ENCODE measurements at regions of chr9 and their contacts with region 1.

Region 1: GRCh38 chr9:38263532-38263931 is 129.0 kb upstream of the ALDH1B1 start:
- DNase-seq: peak in 1 of 2 experiments; percentile 35
- H3K4me3 ChIP-seq: no peak overlapping the region
- H3K4me3 Mint-ChIP-seq: no peak overlapping the region
- H3K27ac Mint-ChIP-seq: no peak overlapping the region
- H3K4me1 ChIP-seq: no peaks in the 10 kb centered on the region
- H3K4me1 Mint-ChIP-seq: no peaks in the 10 kb centered on the region
- H3K27me3 ChIP-seq: no peaks in the 10 kb centered on the region
- H3K27me3 Mint-ChIP-seq: no peaks in the 10 kb centered on the region
- CTCF ChIP-seq: peak; percentile 27 to 50

Region 2: DNA sequence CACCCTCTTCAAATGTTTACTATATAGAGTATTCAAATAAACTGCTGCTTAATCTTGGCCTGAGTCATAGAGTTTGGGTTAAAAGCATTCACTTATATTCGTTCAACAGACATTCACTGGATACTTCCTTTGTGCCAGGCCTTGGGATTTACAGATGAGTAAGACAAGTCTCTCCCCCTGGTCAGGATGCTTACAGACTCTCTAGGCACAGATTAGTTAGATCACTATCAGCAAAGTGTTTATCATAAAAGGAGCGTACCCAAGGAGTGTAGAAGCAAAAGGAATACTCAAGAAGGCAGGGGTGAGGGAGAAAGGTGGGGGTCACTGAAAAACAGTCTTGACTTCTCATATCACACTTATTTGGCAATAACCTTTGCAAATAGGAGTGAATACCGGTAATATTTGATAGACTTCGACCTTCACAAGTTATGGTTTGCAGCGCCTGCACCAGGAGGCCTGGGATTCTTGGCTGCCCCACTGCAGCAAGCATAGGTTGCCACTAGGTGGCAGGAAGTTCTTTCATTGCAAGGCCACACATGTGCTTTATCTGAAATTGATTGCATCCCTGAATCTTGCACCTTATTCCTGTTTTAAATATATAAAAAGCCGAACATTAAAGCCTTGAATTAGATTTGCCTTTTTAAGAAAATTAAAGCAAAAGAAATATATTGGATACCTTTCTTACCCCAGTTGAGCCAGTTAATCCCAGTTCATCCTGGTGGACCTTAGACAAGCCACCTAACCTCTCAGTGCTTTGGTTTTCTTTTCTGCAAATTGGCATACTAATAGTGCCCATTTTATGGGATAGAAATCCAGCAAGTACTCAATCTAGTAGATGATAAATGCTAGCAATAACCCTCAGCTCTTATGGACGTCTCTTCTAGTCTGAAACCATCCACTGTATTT is 516.4 kb before region 1 on chr9:
- CTCF ChIA-PET with region 1: interaction called, 3 read pairs
- POLR2A ChIA-PET with region 1: no interaction called
- intact Hi-C with region 1: loop called (anchors 5 kb)
- DNase-seq: peak; percentile 61 to 73
- H3K4me3 ChIP-seq: no peak overlapping the region
- H3K4me3 Mint-ChIP-seq: no peak overlapping the region
- H3K27ac Mint-ChIP-seq: no peak overlapping the region
- H3K4me1 ChIP-seq: no peaks in the 10 kb centered on the region
- H3K4me1 Mint-ChIP-seq: no peaks in the 10 kb centered on the region
- H3K27me3 ChIP-seq: no peaks in the 10 kb centered on the region
- H3K27me3 Mint-ChIP-seq: no peaks in the 10 kb centered on the region
- CTCF ChIP-seq: peak; percentile 85 to 90

Region 3: GRCh38 chr9:38088006-38088925 is 175.3 kb before region 1 on chr9:
- CTCF ChIA-PET with region 1: interaction called, 20 read pairs
- POLR2A ChIA-PET with region 1: no interaction called
- intact Hi-C with region 1: loop called (anchors 1 kb)
- DNase-seq: peak; percentile 74 to 86
- H3K4me3 ChIP-seq: no peak overlapping the region
- H3K4me3 Mint-ChIP-seq: no peak overlapping the region
- H3K27ac Mint-ChIP-seq: no peak overlapping the region
- H3K4me1 ChIP-seq: no peaks in the 10 kb centered on the region
- H3K4me1 Mint-ChIP-seq: peaks cover 5% of the 10 kb centered on the region
- H3K27me3 ChIP-seq: no peaks in the 10 kb centered on the region
- H3K27me3 Mint-ChIP-seq: no peaks in the 10 kb centered on the region
- CTCF ChIP-seq: peak; percentile 92 to 93